ENCODE measurements at regions of chr9 and their contacts with region 1.

Region 1: DNA sequence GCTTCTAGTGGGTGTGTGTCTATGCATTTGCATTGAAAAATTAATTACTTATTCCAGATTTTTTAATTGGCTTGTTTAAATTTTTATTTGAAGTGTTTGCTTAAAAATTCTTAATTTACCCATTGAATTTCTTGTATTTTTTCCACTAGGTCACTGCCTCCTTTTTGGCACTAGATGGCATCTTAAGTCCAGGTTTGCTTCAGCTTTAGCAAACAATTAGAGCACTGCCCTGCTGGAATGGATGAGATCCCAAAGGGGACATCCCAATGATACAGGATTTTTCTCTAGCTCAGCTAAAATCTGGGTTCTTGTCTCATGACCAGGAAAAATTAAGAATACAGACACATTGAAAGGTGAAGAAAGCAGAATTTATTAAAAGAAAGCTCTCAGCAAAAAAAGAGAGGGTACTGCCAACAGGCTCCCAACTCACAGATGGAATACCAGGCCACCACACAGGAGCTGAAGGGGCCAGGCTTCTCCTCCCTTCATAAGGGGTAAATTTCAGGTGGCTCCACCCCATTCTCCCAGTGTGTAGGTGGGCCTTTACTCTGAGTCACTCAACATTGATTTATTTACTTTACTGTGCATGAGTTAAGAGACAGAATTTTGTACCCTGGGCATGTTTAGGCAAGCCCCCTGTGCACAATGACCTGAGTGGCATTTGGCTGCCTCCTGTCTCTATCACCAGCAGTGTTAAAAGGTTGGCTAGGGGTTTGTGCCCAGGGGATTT is 532.4 kb downstream of the ANXA1 start:
- DNase-seq: peak in 1 of 2 experiments; percentile 23
- H3K4me3 ChIP-seq: no peak overlapping the region
- H3K27ac ChIP-seq: no peak overlapping the region
- H3K4me1 ChIP-seq: peaks cover 0 to 6% (median 0%) of the 10 kb centered on the region in 4 experiments; a peak in 2 of 7 replicates
- H3K27me3 ChIP-seq: no peaks in the 10 kb centered on the region
- CTCF ChIP-seq: peak in 2 of 3 experiments; percentile 74 to 76; a peak in 3 of 4 replicates
- EP300 ChIP-seq: no peak; a peak in 1 of 3 replicates
- POLR2A ChIP-seq: no peak
- RAD21 ChIP-seq: peak; percentile 95 to 97

Region 2: DNA sequence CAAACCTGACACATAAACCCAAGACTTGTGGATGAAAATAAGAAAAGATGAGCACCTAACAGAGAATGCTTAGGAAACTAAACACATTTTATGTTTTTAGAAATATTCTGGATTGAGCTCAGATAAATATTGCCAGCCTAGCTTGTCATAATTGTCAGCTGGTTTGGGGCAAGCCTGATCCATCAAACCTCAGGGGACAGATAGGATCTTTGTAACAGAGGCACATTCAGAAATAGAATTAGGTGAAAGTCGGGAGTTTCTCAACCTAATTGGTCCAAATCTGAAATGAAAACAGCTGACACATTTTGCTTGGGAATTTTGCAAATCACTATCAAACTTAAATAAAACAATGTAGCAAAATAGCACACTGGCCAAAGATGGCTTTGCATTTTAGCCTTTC is 28.7 kb before region 1 on chr9:
- CTCF ChIA-PET with region 1: interaction called, 10 read pairs
- POLR2A ChIA-PET with region 1: no interaction called
- DNase-seq: no peak
- H3K4me3 ChIP-seq: no peak overlapping the region
- H3K27ac ChIP-seq: no peak overlapping the region
- H3K4me1 ChIP-seq: 0 out of 7 replicates have a peak, but pooled peaks cover 0 to 2% (median 0%) of the 10 kb centered on the region in 4 experiments
- H3K27me3 ChIP-seq: no peaks in the 10 kb centered on the region
- CTCF ChIP-seq: no peak
- EP300 ChIP-seq: no peak
- POLR2A ChIP-seq: no peak
- RAD21 ChIP-seq: no peak

Region 3: GRCh38 chr9:73810585-73811215 is 126.7 kb after region 1 on chr9:
- CTCF ChIA-PET with region 1: no interaction called
- POLR2A ChIA-PET with region 1: no interaction called
- DNase-seq: no peak
- H3K4me3 ChIP-seq: no peak overlapping the region
- H3K27ac ChIP-seq: no peak overlapping the region
- H3K4me1 ChIP-seq: no peaks in the 10 kb centered on the region; a peak in 1 of 7 replicates
- H3K27me3 ChIP-seq: no peaks in the 10 kb centered on the region
- CTCF ChIP-seq: no peak
- EP300 ChIP-seq: no peak
- POLR2A ChIP-seq: no peak
- RAD21 ChIP-seq: no peak

Region 4: DNA sequence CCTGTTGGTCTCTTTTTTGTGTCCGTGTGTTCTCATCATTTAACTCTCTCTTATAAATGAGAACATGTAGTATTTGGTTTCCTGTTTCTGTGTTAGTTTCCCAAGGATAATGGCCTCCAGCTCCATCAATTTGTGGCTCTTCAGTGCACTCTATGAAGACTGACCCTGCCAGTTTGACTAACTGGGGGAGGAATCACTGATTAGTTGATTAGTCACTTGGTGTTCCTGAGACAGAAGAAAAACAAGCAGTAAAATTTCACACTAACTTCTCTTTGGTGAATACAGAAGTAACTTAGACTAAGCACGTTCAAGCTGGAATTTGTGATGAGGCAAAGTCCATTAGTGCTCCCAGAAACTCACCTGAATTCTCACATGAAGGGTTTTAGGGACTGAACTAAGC is 317.4 kb after region 1 on chr9:
- CTCF ChIA-PET with region 1: interaction called, 15 read pairs
- POLR2A ChIA-PET with region 1: no interaction called
- DNase-seq: no peak
- H3K4me3 ChIP-seq: no peak overlapping the region
- H3K27ac ChIP-seq: no peak overlapping the region
- H3K4me1 ChIP-seq: peaks cover 0 to 2% (median 0%) of the 10 kb centered on the region in 4 experiments; a peak in 1 of 7 replicates
- H3K27me3 ChIP-seq: no peaks in the 10 kb centered on the region
- CTCF ChIP-seq: no peak
- EP300 ChIP-seq: no peak
- POLR2A ChIP-seq: no peak
- RAD21 ChIP-seq: no peak

Region 5: GRCh38 chr9:74006935-74007334 is 322.9 kb after region 1 on chr9:
- CTCF ChIA-PET with region 1: interaction called, 15 read pairs
- POLR2A ChIA-PET with region 1: no interaction called
- DNase-seq: no peak
- H3K4me3 ChIP-seq: no peak overlapping the region
- H3K27ac ChIP-seq: no peak overlapping the region
- H3K4me1 ChIP-seq: no peaks in the 10 kb centered on the region
- H3K27me3 ChIP-seq: no peaks in the 10 kb centered on the region
- CTCF ChIP-seq: peak in 2 of 3 experiments; percentile 35 to 47; a peak in 2 of 4 replicates
- EP300 ChIP-seq: no peak
- POLR2A ChIP-seq: no peak
- RAD21 ChIP-seq: peak; percentile 80 to 83

Region 6: DNA sequence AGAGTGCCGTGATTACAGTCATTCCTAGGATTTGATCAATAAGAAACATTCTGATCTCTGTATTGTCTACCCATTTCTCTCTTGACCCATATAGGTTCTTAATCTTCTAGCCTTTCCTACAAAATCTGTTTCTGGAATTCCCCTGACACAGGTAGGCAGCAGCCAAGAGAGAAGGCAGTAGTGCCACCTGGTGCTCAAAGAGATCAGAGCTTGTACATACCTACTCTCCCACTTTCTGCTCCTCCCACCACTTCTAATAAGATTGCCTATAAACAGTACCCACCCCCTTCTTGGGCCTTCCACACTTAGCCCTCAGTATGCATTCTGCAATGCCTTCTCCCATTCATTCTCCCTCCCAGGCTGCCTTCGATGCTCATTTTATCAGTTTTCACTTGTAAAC is 695.7 kb after region 1 on chr9:
- CTCF ChIA-PET with region 1: interaction called, 11 read pairs
- POLR2A ChIA-PET with region 1: no interaction called
- DNase-seq: peak; percentile 31 to 54
- H3K4me3 ChIP-seq: no peak overlapping the region
- H3K27ac ChIP-seq: no peak overlapping the region
- H3K4me1 ChIP-seq: peaks cover 0 to 5% (median 1%) of the 10 kb centered on the region in 4 experiments; a peak in 4 of 7 replicates
- H3K27me3 ChIP-seq: no peaks in the 10 kb centered on the region
- CTCF ChIP-seq: peak; percentile 11 to 78 (median 72)
- EP300 ChIP-seq: no peak
- POLR2A ChIP-seq: no peak
- RAD21 ChIP-seq: peak; percentile 91 to 92